Sciatic nerve (tissue), 2 donors: ENCODE measurements at regions of chr13 and their contacts with region 1.

Region 1: DNA sequence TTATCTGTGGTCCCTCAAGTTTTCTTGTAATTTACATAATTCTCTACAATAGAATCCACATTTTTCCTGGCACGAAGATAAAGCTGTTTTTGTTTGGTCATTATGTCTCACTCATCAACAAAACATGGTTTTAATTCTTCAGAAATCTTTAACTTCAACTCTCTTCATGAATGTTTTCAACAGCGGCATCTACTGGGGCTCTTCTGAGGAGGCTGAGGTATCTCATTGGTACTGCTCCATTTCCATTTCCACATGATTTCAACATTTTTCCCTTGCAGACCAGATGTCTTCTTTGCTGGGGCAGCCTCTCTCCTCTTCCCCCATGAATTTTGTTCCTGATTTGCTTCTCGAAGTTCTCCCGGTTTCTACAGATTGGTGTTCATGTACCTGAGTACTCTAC is 5.8 kb upstream of the KBTBD7 start:
- DNase-seq: no peak
- ATAC-seq: no peak

Region 2: DNA sequence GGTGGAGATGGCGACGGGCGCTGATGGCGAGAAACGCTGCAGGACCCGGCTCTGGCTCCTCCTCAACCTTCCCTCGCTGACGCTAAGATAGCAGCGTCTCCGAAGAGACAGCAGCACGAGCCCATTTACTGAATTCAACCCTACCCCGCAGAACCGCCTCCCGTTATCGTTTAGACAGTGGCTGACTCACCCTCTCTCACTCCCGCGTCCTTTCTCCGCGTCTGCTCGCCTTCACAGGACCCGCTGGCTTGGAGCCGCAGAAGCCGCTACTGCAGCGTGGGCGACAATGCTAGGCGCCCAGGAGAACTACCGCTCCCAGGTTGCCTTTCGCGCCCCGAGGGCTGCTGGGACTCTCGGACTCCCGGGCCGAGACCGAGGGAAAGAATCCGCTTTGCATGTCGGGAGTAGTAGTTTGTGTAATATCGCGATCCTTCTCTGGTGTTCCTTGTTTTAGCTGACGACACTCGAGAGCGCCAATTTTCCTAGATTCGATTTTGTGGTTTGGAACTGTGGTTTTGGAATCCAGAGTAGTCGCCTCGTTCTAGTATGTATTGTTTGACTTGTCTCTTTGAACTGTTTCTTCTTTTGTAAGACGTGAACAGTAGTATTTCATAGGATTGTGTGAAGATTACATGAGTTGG is 67.5 kb before region 1 on chr13 and contains the start of gene KBTBD6:
- intact Hi-C with region 1: loop called (anchors 10 kb)
- DNase-seq: peak; percentile 95
- ATAC-seq: peak; percentile 100
- total RNA-seq, gene KBTBD6: 9.8 TPM